ENCODE measurements at regions of chr17 and their contacts with region 1.

Region 1: GRCh38 chr17:78592991-78593329 is 15.8 kb upstream of the DNAH17 start:
- DNase-seq: no peak
- H3K4me3 ChIP-seq: no peak overlapping the region; the same call in 1 of the 2 replicates
- H3K27ac ChIP-seq: peak overlapping the region; percentile 92
- H3K4me1 ChIP-seq: peaks cover 67% of the 10 kb centered on the region
- H3K27me3 ChIP-seq: no peaks in the 10 kb centered on the region
- CTCF ChIP-seq: no peak

Region 2: GRCh38 chr17:78526231-78527025 is 66.5 kb before region 1 on chr17:
- CTCF ChIA-PET with region 1: no interaction called
- POLR2A ChIA-PET with region 1: no interaction called
- intact Hi-C with region 1: loop called (anchors 1 kb)
- DNase-seq: peak; percentile 83 to 94
- H3K4me3 ChIP-seq: no peak overlapping the region
- H3K27ac ChIP-seq: peak overlapping the region; percentile 63
- H3K4me1 ChIP-seq: peaks cover 21% of the 10 kb centered on the region
- H3K27me3 ChIP-seq: no peaks in the 10 kb centered on the region
- CTCF ChIP-seq: no peak

Region 3: DNA sequence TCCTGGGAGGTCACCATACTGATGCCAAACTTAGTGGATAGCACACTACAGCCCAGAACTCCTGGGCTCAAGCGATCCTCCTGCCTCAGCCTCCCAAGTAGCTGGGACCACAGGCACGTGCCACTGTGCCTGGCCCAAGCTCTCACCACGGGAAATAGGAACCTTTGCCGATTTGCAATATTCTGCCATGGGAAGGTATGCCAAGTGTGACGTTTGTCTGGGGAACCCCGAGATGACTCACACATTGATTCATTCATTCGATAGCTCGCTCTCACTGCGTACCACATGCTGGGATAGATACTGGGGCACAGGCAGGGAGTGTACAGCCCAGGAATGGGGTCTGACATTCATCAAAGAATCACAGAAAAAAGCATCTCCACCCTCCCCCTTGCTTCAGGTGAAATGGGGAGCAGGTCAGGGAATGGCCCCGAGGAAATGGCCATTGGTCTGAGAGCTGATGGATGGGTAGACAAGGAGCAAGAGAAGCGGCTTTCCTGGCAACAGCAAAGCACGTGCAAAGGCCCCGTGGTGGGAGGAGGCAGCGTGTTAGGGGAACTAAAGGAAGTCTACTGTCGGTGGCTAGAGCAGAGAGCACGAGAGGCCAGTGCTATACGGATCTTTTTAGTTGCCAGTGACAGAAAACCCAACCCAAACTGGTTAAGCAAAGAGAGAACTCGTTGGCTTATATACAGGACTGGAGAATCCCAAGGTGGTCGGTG is 59.9 kb before region 1 on chr17:
- CTCF ChIA-PET with region 1: no interaction called
- POLR2A ChIA-PET with region 1: no interaction called
- intact Hi-C with region 1: loop called (anchors 2 kb)
- DNase-seq: peak; percentile 40 to 80
- H3K4me3 ChIP-seq: no peak overlapping the region
- H3K27ac ChIP-seq: peak overlapping the region; percentile 27; the same call in 1 of the 2 replicates
- H3K4me1 ChIP-seq: peaks cover 43% of the 10 kb centered on the region
- H3K27me3 ChIP-seq: no peaks in the 10 kb centered on the region
- CTCF ChIP-seq: no peak

Region 4: DNA sequence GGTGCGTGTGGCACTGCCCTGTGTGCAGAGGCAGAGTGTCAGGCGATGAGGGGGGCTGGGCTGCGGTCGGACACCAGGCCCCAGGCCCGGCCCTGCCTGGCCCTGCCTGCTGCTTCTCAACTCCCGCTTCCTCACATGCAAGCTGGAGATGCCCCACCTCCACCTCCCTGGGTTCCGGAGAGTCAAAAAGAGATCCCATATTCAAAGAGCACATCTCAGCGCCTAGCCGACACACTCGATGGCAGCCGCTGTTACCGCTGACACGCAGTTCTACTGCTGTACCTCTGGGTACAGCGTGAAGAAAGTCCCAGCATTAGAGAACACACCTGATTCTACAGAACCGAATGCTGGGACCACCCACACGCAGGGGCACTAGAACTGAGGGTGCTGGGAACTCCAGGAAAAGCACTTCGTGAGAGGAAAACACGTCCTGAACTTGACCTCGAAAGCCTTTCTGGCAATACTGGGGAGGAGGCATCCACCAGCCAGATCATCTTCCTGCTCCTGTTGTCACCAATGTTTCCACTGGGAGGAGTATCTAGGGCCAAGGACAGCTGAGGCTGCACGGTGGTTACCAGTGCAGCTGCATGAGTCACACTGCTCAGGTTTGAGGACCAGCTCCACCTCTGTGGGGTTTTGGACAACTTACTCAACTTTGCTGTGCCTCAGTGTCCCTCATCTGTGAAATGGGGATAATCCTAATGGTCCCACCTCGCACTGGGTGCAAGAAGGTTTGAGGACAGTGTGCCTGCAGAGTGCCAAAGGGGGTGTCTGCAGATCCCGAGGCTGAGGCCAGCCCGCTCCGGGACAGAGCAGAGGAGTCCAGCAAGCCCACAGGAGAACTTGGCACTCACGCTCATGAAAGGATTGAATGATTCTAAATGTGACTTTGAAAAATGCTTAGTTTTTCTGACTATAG is 84.6 kb after region 1 on chr17:
- CTCF ChIA-PET with region 1: no interaction called
- POLR2A ChIA-PET with region 1: no interaction called
- intact Hi-C with region 1: loop called (anchors 1 kb)
- DNase-seq: no peak
- H3K4me3 ChIP-seq: no peak overlapping the region
- H3K27ac ChIP-seq: no peak overlapping the region
- H3K4me1 ChIP-seq: peaks cover 22% of the 10 kb centered on the region
- H3K27me3 ChIP-seq: no peaks in the 10 kb centered on the region
- CTCF ChIP-seq: no peak